HepG2 (cell line): ENCODE measurements at regions of chr2 and their contacts with region 1.

Region 1: GRCh38 chr2:136423516-136423996 is 305.6 kb upstream of the CXCR4 start:
- DNase-seq: peak; percentile 61
- ATAC-seq: peak; percentile 100
- H3K4me3 ChIP-seq: peak overlapping the region in 2 of 3 experiments; percentile 11 to 64; a peak in 2 of 6 replicates
- H3K27ac ChIP-seq: no peak overlapping the region
- H3K4me1 ChIP-seq: peaks cover 10% of the 10 kb centered on the region
- H3K27me3 ChIP-seq: peaks cover 5 to 45% of the 10 kb centered on the region in 2 experiments; a peak in 3 of 5 replicates
- CTCF ChIP-seq: peak; percentile 97
- EP300 ChIP-seq: no peak
- POLR2A ChIP-seq: no peak
- RAD21 ChIP-seq: peak; percentile 92

Region 2: GRCh38 chr2:136135921-136136906 is 287.3 kb before region 1 on chr2:
- CTCF ChIA-PET with region 1: no interaction called
- POLR2A ChIA-PET with region 1: no interaction called
- in situ Hi-C with region 1: no loop called
- intact Hi-C with region 1: no loop called
- DNase-seq: no peak
- ATAC-seq: no peak
- H3K4me3 ChIP-seq: no peak overlapping the region
- H3K27ac ChIP-seq: no peak overlapping the region
- H3K4me1 ChIP-seq: no peaks in the 10 kb centered on the region
- H3K27me3 ChIP-seq: peaks cover 0 to 18% of the 10 kb centered on the region in 2 experiments; a peak in 4 of 5 replicates
- CTCF ChIP-seq: no peak
- EP300 ChIP-seq: no peak
- POLR2A ChIP-seq: no peak
- RAD21 ChIP-seq: no peak

Region 3: DNA sequence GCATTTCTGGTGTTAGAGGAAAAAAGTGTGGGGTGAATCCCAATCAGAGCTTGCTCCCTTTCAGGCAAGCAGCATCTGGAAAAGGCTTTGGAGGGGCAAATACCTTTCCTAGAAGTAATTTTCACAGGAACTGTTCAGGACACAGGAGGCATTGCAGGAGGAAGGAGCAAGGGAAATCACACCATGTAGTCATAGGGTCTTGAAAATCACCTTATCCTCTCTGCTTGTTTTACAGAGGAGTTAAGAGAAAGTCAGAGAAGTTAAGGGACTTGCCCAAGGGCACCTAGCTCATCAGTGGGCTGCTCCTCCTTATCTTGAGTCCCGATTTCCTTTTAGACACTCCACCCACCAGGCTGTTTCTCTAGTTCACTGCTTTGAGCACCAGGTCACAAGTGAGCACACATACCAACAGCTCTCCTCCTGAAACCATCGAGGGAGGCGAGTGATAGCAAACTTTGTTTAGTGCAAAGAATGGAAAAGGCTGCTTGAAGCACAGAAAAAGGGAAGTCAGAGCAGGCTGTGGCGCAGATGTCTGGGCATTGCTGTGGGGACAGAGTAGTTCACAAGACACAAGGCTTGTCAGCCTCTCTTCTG is 216.4 kb before region 1 on chr2:
- CTCF ChIA-PET with region 1: no interaction called
- POLR2A ChIA-PET with region 1: no interaction called
- in situ Hi-C with region 1: no loop called
- intact Hi-C with region 1: no loop called
- DNase-seq: no peak
- ATAC-seq: no peak
- H3K4me3 ChIP-seq: no peak overlapping the region
- H3K27ac ChIP-seq: no peak overlapping the region
- H3K4me1 ChIP-seq: no peaks in the 10 kb centered on the region
- H3K27me3 ChIP-seq: peaks cover 0 to 6% of the 10 kb centered on the region in 2 experiments; a peak in 1 of 5 replicates
- CTCF ChIP-seq: no peak
- EP300 ChIP-seq: no peak
- POLR2A ChIP-seq: no peak
- RAD21 ChIP-seq: no peak

Region 4: DNA sequence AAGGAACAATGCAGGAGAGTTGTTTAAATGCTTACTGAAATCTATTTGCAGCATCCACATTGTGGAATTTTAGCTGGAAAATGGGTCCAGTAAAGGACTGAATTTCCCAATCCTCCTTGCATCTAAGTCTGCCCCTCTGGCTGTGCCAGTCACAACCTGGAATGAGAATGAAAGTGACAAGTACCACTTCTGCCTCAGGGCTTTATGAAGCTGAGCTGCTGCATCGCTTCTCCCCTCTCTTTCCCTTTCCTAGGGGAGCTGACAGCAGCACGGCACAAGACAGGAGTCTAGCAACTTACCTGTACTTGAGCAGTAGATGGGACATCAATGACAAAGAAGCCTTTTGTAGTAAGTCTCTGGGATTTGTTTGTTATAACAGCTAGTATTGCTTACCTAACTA is 314.5 kb after region 1 on chr2:
- CTCF ChIA-PET with region 1: interaction called, 10 read pairs
- POLR2A ChIA-PET with region 1: no interaction called
- in situ Hi-C with region 1: loop called (anchors 10 kb)
- intact Hi-C with region 1: loop called (anchors 1 kb)
- DNase-seq: no peak
- ATAC-seq: no peak
- H3K4me3 ChIP-seq: no peak overlapping the region
- H3K27ac ChIP-seq: no peak overlapping the region
- H3K4me1 ChIP-seq: no peaks in the 10 kb centered on the region
- H3K27me3 ChIP-seq: no peaks in the 10 kb centered on the region
- CTCF ChIP-seq: no peak
- EP300 ChIP-seq: no peak
- POLR2A ChIP-seq: no peak
- RAD21 ChIP-seq: no peak

Region 5: GRCh38 chr2:136920652-136921333 is 497.2 kb after region 1 on chr2:
- CTCF ChIA-PET with region 1: no interaction called
- POLR2A ChIA-PET with region 1: no interaction called
- in situ Hi-C with region 1: no loop called
- intact Hi-C with region 1: loop called (anchors 2 kb)
- DNase-seq: peak; percentile 7
- ATAC-seq: peak; percentile 87
- H3K4me3 ChIP-seq: no peak overlapping the region
- H3K27ac ChIP-seq: no peak overlapping the region
- H3K4me1 ChIP-seq: no peaks in the 10 kb centered on the region
- H3K27me3 ChIP-seq: no peaks in the 10 kb centered on the region
- CTCF ChIP-seq: 0 out of 2 replicates have a peak, but pooled peaks have one; percentile 8
- EP300 ChIP-seq: no peak
- POLR2A ChIP-seq: no peak
- RAD21 ChIP-seq: no peak

Region 6: DNA sequence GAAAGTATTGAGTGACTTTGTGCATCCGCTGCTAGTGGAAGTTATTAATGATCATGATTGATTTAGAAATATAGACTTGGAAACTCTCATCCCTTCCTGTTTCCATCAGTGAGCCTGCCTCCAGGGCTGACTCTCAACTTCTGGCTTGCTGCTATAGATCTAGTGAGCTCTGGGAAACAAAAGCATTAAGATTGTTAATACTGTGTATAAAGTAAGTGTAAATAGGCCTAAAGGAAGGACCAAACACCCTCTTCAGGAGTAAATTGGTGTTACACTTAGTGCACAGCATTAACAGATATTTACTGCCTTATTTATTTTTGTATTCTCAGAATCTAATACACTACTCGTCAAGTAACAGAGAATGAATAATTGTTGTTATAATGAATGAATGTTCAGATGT is 627.4 kb after region 1 on chr2:
- CTCF ChIA-PET with region 1: no interaction called
- POLR2A ChIA-PET with region 1: no interaction called
- in situ Hi-C with region 1: no loop called
- intact Hi-C with region 1: loop called (anchors 10 kb)
- DNase-seq: no peak
- ATAC-seq: peak; percentile 71
- H3K4me3 ChIP-seq: no peak overlapping the region
- H3K27ac ChIP-seq: no peak overlapping the region
- H3K4me1 ChIP-seq: peaks cover 22% of the 10 kb centered on the region
- H3K27me3 ChIP-seq: no peaks in the 10 kb centered on the region
- CTCF ChIP-seq: peak; percentile 23; the same call in 1 of the 2 replicates
- EP300 ChIP-seq: no peak
- POLR2A ChIP-seq: no peak
- RAD21 ChIP-seq: no peak

Region 7: DNA sequence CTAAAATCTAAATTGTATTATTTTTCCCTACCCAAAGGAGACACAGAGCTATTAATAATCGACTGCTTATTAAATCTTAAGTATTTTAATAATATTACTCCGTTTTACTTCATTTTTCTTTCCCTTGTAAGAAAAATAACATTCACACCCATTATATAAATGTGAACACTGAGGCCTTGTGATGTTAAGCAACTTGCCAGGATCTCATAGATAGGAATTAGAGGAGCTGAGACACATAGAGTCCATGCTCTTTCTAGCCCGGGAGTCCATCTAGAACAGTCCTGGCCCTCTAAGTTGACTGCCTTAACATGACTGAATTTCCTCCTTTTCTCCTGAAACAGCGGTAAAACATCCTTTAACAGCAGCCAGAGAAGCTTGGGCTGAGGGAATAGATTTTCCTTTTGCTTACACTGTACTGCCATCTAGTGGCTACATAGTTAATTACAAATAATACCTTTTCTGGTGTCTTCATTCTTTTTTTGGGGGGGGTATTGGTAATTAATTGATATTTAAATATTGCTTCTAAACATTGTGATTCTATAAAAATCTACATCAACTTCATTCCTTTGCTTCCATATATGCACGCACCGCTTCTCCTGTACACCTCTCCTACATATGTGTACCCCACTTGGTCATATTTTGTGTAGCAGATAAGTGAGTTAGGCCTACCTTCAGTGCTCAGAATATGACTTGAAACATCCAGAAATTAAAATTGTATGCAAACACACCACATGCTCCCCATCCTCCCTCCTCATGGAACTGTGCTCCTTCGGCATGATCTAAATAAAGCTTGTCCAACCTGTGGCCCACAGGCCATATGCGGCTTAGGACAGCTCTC is 1414.9 kb after region 1 on chr2:
- CTCF ChIA-PET with region 1: interaction called, 21 read pairs
- POLR2A ChIA-PET with region 1: no interaction called
- in situ Hi-C with region 1: loop called (anchors 5 kb)
- intact Hi-C with region 1: loop called (anchors 1 kb)
- DNase-seq: peak; percentile 58
- ATAC-seq: peak; percentile 86
- H3K4me3 ChIP-seq: no peak overlapping the region
- H3K27ac ChIP-seq: no peak overlapping the region
- H3K4me1 ChIP-seq: no peaks in the 10 kb centered on the region
- H3K27me3 ChIP-seq: no peaks in the 10 kb centered on the region; a peak in 1 of 5 replicates
- CTCF ChIP-seq: peak; percentile 86
- EP300 ChIP-seq: no peak
- POLR2A ChIP-seq: no peak
- RAD21 ChIP-seq: peak; percentile 86